CD4-positive, alpha-beta T cell (primary cell): ENCODE measurements at regions of chr3 and their contacts with region 1.

Region 1: GRCh38 chr3:71076361-71077002 is 507.0 kb downstream of the FOXP1 start:
- DNase-seq: no peak
- ATAC-seq: no peak
- H3K4me3 ChIP-seq: no peak overlapping the region
- H3K4me3 Mint-ChIP-seq: no peak overlapping the region
- H3K27ac ChIP-seq: peak overlapping the region in 1 of 2 donors; percentile 29
- H3K27ac Mint-ChIP-seq: peak overlapping the region; percentile 86
- H3K4me1 ChIP-seq: peaks cover 47% of the 10 kb centered on the region
- H3K4me1 Mint-ChIP-seq: peaks cover 93% of the 10 kb centered on the region
- H3K27me3 ChIP-seq: no peaks in the 10 kb centered on the region
- H3K27me3 Mint-ChIP-seq: no peaks in the 10 kb centered on the region
- CTCF ChIP-seq: no peak

Region 2: DNA sequence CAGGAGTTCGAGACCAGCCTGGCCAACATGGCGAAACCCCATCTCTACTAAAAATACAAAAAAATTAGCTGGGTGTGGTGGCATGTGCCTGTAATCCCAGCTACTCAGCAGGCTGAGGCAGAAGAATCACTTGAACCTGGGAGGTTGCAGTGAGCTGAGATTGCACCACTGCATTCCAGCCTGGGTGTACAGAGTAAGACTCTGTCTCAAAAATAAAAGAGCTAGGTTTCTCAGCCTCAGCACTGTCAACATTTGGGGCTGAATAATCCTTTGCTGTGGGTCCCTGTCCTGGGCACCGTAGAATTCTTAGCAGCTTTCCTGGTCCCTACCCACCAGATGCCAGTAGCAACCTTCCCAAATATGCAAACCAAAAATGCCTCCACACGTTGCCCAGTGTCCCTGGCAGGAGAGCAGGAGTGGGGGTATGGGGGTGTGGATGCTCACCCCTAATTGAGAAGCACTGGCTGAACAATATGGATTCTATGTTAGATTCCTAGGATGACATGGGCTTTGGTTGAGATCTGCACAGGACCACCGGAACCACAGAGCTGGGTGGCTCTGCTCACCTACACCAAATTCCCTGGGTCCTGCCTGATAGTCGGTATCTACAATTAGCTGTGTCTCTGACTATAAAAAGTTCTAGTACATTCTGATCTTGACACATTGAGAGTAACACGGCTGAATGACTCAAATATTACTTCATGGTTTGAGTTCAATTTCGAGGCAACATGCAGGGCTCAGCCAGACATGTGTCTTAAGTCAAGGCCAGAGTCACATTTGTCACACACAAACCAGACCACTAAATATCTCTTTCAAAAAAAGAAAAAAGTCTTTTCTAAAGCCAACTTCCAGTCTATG is 187.1 kb before region 1 on chr3:
- CTCF ChIA-PET with region 1: no interaction called
- POLR2A ChIA-PET with region 1: no interaction called
- intact Hi-C with region 1: no loop called
- DNase-seq: no peak
- ATAC-seq: no peak
- H3K4me3 ChIP-seq: no peak overlapping the region
- H3K4me3 Mint-ChIP-seq: no peak overlapping the region
- H3K27ac ChIP-seq: no peak overlapping the region
- H3K27ac Mint-ChIP-seq: no peak overlapping the region
- H3K4me1 ChIP-seq: no peaks in the 10 kb centered on the region
- H3K4me1 Mint-ChIP-seq: no peaks in the 10 kb centered on the region
- H3K27me3 ChIP-seq: no peaks in the 10 kb centered on the region
- H3K27me3 Mint-ChIP-seq: no peaks in the 10 kb centered on the region
- CTCF ChIP-seq: no peak

Region 3: DNA sequence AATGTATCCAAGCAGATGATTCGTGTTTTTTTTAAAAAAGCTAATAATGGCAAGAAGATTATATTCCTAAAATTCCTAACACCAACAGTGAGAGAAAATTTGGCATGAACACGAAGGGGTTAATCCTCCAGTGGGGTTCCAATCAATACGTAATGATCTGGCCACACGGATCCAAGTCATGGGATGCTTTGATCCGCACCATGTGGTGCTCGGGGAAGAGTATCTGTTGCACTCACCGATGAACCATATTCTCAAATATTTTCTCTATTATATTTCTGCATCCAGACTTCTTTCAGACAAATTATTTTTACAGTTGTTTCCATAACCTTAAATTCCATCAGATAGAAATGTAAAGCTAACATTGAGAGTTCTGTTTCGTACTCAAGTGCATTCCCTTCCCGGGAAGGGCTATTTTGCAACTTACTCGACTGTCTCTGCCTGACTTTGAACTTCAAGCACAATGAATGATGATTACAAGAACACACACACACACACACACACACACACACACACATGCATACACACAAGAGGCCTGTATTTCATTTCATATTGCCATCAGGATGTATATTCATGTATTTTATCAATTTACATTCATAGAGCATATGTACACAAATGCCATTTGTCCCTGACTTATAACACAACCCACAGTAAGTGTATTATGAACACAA is 60.2 kb before region 1 on chr3:
- CTCF ChIA-PET with region 1: no interaction called
- POLR2A ChIA-PET with region 1: no interaction called
- intact Hi-C with region 1: no loop called
- DNase-seq: no peak
- ATAC-seq: no peak
- H3K4me3 ChIP-seq: no peak overlapping the region
- H3K4me3 Mint-ChIP-seq: no peak overlapping the region
- H3K27ac ChIP-seq: no peak overlapping the region
- H3K27ac Mint-ChIP-seq: peak overlapping the region; percentile 61
- H3K4me1 ChIP-seq: peaks cover 7% of the 10 kb centered on the region
- H3K4me1 Mint-ChIP-seq: peaks cover 85% of the 10 kb centered on the region
- H3K27me3 ChIP-seq: no peaks in the 10 kb centered on the region
- H3K27me3 Mint-ChIP-seq: no peaks in the 10 kb centered on the region
- CTCF ChIP-seq: no peak

Region 4: DNA sequence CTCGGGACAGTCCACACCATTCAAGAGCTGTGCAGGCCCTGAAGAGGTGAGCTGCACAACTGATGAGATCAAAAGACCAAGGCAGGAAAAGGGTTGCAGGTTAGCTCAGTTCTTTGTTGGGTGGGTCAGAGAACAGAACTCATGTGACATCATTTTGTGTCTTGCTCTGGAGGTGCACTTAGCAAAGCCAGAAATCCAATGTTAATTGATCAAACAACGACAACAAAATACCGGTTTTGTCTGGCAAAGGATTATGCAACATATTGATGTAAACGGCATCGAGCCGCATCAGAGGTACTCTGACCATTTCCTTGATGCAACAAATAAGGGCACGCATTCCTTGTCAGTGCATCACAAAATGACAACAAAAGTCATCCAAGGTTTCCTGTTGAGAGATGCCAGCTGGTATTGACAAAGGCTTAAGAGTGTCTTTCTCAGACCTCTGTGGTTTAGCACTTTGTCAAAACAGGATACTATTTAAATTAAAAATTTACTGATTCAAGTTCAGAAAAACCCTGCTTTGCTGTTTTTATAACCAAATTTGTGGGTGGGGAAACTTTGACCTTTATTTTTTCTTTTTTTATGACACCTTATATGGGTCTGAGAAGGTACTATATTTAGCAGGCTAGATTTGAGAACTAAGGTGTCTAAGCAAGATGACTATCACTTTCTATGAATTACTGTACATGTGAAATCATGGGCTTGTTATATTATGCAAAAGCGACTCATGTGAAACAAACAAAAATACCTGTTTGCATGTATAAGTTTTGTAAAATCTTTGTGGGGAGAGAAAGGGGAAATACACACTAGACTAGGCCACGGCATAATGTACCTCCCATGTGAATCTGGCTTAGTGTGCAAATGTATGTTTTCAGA is 10.9 kb after region 1 on chr3:
- CTCF ChIA-PET with region 1: interaction called, 3 read pairs
- POLR2A ChIA-PET with region 1: interaction called, 14 read pairs
- intact Hi-C with region 1: no loop called
- DNase-seq: peak in 10 of 14 experiments; percentile 14 to 86 (median 47)
- ATAC-seq: peak; percentile 77
- H3K4me3 ChIP-seq: peak overlapping the region; percentile 11
- H3K4me3 Mint-ChIP-seq: peak overlapping the region; percentile 69
- H3K27ac ChIP-seq: peak overlapping the region; percentile 57 to 71
- H3K27ac Mint-ChIP-seq: peak overlapping the region; percentile 86
- H3K4me1 ChIP-seq: peaks cover 81% of the 10 kb centered on the region
- H3K4me1 Mint-ChIP-seq: peaks cover 86% of the 10 kb centered on the region
- H3K27me3 ChIP-seq: no peaks in the 10 kb centered on the region
- H3K27me3 Mint-ChIP-seq: no peaks in the 10 kb centered on the region
- CTCF ChIP-seq: no peak